AG04450 (cell line): ENCODE measurements at regions of chr11 and their contacts with region 1.

Region 1: DNA sequence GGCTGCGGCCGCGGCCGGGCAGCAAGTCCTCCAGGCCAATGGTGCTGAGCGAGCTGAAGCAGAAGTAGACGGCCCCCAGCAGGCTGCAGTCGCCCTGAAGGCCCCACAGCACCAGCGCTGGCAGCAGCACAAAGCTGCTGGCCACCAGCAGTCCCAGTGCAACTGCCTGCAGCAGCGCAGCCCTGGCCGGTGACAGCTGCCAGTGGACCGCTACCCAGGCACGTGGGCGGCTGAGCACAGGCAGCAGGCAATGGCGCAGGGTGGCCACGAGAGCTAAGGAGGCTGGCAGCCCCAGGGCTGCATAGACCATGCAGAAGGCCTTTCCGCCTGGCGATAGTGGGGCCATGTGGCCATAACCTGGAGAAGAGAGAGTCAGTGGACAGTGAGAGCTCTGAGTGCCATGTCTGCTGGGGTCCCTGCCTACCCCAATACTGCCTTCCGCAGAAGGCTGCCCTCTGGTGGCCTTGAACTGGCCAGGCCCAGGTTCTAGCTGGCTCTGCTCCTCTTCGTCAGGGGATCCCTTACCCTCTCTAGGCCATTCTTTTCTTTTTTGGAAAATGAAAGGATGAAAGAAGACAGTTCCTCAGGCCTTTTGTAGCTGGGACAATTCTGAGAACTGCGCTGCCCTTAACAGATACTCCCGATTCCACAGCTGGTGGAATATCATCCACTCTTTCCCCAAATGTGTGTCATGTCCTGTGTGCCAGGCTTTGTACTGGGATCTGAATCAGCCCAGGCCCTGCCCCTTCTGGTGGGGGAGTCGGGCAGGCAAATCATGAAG is 1.9 kb downstream of the KCNK7 start:
- DNase-seq: no peak
- H3K4me3 ChIP-seq: no peak overlapping the region
- H3K27ac ChIP-seq: no peak overlapping the region
- H3K27me3 ChIP-seq: no peaks in the 10 kb centered on the region
- CTCF ChIP-seq: peak; percentile 75

Region 2: DNA sequence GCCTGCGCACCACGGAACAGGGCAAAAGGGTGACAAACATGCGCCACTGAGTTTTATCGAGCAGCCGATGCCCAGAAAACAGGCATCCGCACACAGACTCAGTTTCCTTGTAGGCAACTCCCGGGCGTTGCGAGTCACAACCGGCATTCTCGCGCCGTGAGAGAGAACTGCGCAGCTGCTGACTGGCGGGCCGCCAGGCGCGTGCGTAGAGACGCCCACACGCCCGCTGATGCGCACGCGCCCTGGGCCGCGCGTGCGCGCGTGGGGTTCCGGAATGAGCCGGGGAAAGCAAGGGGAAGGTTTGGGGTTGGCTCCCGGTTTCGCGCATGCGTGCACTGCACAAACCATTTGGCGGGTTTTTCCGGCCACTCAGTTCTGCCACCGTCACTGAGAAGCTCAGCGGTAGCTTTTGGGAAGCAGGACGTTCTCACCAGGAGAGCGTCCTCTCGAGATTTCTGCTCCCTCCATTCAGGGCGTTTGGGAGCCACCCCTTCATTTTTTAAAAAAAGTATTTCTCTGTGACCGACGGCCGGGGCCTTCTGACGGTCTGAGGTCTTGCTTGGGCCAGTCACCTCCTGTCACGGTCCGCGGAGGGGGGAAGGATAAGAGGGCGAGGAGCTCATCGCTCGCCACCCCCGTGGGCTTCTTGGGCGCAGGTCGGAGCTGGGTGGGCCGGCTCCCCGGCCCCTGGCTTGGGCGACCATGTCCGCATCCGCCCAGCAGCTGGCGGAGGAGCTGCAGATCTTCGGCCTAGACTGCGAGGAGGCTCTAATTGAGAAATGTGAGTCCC is 331.9 kb before region 1 on chr11 and contains the start of gene POLA2:
- CTCF ChIA-PET with region 1: no interaction called
- POLR2A ChIA-PET with region 1: no interaction called
- DNase-seq: peak; percentile 86
- H3K4me3 ChIP-seq: peak within 1 kb of the TSS; percentile 83
- H3K27ac ChIP-seq: peak within 1 kb of the TSS; percentile 84
- H3K27me3 ChIP-seq: no peaks in the 10 kb centered on the region
- CTCF ChIP-seq: no peak
- polyA plus RNA-seq, gene POLA2: 10.4 and 14.1 TPM in 2 replicates

Region 3: GRCh38 chr11:65386307-65387081 is 207.2 kb before region 1 on chr11 and contains the start of gene FRMD8:
- CTCF ChIA-PET with region 1: no interaction called
- POLR2A ChIA-PET with region 1: no interaction called
- DNase-seq: no peak
- H3K4me3 ChIP-seq: peak within 1 kb of the TSS; percentile 88
- H3K27ac ChIP-seq: peak within 1 kb of the TSS; percentile 81
- H3K27me3 ChIP-seq: no peaks in the 10 kb centered on the region
- CTCF ChIP-seq: no peak
- polyA plus RNA-seq, gene FRMD8: 10.7 and 14.1 TPM in 2 replicates

Region 4: DNA sequence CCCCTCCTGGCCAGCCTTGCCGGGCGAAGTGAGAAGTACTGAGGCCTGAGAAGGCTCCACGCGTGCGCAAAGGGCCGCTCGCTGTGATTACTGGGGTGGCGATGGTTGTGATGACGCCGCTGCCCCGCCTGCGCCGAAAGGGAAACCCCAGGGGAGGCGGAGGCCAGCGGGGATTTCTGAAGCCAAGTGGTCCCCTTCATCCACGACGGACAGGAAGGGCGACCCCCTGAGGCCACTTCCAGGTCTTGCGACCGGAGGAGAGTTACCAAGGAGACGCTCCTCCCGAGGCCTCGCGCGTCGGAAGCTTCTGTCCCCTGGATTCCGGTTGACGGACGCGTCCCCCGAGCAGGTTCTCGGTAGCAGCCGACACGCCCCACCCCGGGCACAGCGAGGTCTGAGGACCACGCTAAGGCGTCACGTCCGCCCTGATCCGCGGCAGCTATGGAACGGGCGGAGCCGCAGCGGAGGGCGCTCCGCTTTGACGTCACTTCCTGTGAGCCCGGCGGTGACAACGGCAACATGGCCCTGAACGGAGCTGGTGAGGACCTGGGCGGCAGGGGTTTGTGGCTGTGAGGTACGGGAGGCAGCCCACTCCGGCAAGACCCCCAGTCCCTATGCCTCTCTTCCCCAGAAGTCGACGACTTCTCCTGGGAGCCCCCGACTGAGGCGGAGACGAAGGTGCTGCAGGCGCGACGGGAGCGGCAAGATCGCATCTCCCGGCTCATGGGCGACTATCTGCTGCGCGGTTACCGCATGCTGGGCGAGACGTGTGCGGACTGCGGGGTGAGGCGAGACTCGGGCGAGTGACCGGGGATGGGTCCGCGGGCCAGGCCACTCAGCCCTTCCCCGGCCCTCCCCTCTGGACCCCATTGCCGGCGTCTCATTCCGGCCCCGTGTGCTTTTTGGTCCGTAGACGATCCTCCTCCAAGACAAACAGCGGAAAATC is 23.5 kb before region 1 on chr11 and contains the start of gene ZNRD2:
- CTCF ChIA-PET with region 1: interaction called, 13 read pairs
- POLR2A ChIA-PET with region 1: no interaction called
- DNase-seq: peak; percentile 96
- H3K4me3 ChIP-seq: peak within 1 kb of the TSS; percentile 98
- H3K27ac ChIP-seq: peak within 1 kb of the TSS; percentile 95
- H3K27me3 ChIP-seq: no peaks in the 10 kb centered on the region
- CTCF ChIP-seq: peak; percentile 26
- polyA plus RNA-seq, gene ZNRD2: 23.5 and 44.3 TPM in 2 replicates

Region 5: GRCh38 chr11:65576867-65577769 is 16.6 kb before region 1 on chr11:
- CTCF ChIA-PET with region 1: interaction called, 17 read pairs
- POLR2A ChIA-PET with region 1: interaction called, 5 read pairs
- DNase-seq: no peak
- H3K4me3 ChIP-seq: peak overlapping the region; percentile 65
- H3K27ac ChIP-seq: peak overlapping the region; percentile 47
- H3K27me3 ChIP-seq: no peaks in the 10 kb centered on the region
- CTCF ChIP-seq: no peak

Region 6: DNA sequence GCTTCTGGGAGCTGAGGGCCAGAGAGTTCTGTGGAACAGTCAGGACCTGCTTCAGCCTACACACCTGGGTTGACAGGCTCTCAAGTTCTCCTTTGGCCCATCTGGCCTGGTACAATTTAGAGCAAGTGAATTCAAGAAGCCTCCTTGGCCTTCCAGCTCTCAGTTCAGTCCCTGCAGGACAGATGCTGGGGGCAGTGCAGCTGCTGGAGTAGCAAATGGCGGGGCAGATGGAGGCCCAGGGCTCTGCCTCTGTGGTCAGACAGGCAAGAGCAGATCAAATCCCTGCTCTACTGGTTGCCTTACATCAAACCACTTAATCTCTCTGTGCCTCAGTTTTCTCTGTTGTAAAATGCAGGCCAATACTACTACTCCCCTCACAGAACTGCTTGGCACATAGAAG is 10.6 kb after region 1 on chr11:
- CTCF ChIA-PET with region 1: interaction called, 28 read pairs
- POLR2A ChIA-PET with region 1: interaction called, 4 read pairs
- DNase-seq: no peak
- H3K4me3 ChIP-seq: no peak overlapping the region
- H3K27ac ChIP-seq: no peak overlapping the region
- H3K27me3 ChIP-seq: no peaks in the 10 kb centered on the region
- CTCF ChIP-seq: no peak

Region 7: DNA sequence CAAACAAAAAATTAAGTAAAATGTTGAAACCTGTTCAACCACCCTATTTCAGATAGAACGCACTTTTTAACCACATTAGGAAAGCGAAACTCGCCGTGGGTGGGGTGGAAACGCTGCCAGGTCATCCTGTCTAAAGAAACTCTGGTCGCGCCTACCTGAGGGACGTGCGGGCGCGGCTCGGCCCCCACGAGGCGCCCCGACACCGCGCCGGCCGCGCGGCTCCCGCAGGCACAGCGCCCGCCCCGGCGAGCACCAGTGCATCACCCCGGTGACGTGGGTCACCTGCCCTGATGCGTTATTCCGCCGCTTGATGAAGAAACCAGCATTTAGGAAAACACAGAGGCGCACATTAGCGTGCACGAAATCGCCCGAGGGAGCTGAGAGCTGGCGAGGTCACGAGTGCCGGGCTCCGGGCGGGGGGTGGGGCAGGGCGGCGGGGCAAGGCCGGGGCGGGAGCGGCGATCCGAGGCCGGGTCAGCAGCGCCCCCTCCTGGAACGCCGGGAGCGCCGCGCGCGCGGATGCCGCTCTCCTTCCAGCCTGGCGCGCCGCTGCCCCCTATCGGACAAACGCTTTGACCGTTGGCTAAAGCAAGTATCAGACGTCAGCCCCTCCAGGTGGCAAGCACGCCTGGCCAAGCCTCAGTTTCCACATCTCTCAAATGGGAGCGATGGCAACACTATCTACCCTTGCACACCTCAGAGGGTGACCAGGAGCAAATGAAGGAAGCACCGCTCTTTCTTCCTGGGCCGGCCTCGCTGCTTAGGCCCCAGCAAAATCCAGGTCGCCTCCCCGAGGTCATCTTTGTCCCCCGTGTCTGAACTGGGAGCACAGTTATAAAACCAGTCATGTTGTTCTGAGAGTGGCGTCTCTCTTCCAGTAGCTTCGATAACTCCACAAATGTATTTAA is 224.4 kb after region 1 on chr11:
- CTCF ChIA-PET with region 1: no interaction called
- POLR2A ChIA-PET with region 1: interaction called, 17 read pairs
- DNase-seq: peak; percentile 55
- H3K4me3 ChIP-seq: peak overlapping the region; percentile 77
- H3K27ac ChIP-seq: no peak overlapping the region
- H3K27me3 ChIP-seq: peaks cover 13% of the 10 kb centered on the region
- CTCF ChIP-seq: peak; percentile 93